ENCODE measurements at regions of chr9 and their contacts with region 1.

Region 1: DNA sequence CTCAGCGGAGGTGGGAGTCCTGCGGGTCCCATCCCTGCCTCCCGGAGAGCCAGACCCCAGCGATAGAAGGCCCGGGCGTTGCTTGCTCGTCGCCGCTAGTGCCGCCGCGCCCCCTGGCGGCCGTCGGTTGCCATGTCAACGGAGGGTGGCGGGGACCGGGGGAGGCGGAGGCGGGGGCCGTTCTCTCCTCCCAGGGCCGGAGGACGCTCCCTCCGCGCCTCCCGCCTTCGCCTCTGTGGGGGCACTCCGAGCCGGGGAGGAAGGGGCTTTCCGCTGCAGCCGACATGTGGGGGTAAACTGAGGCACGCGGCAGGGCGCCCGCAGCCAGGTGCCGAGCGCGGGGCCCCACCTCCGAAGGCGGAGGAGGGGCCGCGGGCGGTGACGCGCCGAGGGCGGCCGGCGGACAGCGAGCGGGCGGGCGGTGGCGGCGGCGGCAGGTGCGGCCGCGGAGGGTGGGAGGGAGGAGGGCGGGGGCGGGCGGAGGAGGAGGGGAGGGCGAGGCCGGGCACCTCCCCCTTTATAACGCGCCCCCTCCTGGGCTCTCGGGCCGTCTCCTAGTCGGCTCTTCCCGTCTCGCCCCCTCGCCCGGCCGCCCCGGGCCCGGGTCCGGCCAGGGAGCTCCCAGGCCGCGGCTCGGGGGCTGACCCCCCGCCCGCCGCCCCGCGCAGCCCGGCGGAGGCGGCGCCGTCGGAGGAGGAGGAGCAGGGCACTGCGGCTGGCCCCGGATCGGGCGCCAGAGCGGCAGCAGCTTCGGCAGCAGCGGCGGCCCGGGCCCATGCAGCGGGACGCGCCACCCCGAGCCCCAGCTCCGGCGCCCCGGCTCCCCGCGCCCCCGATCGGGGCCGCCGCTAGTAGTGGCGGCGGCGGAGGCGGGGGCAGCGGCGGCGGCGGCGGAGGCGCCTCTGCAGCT is 556 bp upstream of the CDK9 start:
- DNase-seq: peak; percentile 90
- H3K4me3 ChIP-seq: peak overlapping the region; percentile 77
- H3K27ac ChIP-seq: peak overlapping the region; percentile 93
- H3K4me1 ChIP-seq: peaks cover 6% of the 10 kb centered on the region
- H3K27me3 ChIP-seq: no peaks in the 10 kb centered on the region
- CTCF ChIP-seq: peak; percentile 94

Region 2: GRCh38 chr9:127568971-127569885 is 216.1 kb before region 1 on chr9:
- CTCF ChIA-PET with region 1: no interaction called
- POLR2A ChIA-PET with region 1: no interaction called
- intact Hi-C with region 1: no loop called
- DNase-seq: peak; percentile 91
- H3K4me3 ChIP-seq: peak overlapping the region; percentile 97
- H3K27ac ChIP-seq: peak overlapping the region; percentile 82
- H3K4me1 ChIP-seq: peaks cover 24% of the 10 kb centered on the region
- H3K27me3 ChIP-seq: no peaks in the 10 kb centered on the region
- CTCF ChIP-seq: no peak

Region 3: DNA sequence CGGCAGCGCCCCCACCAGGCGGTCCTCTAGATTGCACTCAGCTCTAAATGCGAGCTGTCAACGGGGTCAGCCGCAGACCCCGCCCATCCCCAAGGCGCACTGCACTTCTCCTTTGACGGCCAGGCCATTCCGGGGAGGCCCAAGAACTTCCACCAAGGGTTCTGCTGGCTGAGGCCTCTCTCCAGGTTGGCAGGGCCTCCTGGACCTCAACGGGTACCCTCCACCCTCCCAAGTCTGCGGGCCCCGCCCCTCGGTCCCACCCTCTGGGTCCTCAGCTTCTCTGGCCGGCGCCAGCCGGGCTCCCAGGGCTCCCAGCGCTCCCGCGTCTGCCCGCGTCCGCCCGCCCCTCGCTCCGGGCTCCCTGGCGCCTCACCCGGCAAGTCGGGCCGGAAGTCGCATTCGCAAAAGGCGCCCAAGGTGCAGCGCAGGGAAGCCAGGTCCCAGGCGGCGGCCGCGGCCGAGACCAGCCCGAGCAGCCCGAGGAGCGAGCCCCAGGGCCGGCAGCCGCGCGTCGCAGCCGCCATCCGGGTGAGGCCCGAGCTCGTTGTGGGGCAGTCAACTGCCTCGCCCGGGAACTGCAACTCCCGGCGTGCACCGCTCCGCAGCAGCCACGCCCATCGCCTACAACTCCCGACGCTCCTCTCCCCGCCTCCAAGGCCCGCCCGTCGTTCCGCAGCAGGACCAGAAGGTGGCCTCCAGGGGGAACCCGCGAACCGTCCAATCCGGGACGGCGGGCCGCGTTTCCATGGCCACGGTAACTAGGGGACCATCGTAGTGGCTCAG is 50.3 kb before region 1 on chr9 and contains the start of gene TOR2A:
- CTCF ChIA-PET with region 1: interaction called, 5 read pairs
- POLR2A ChIA-PET with region 1: no interaction called
- intact Hi-C with region 1: loop called (anchors 1 kb)
- DNase-seq: peak; percentile 99
- H3K4me3 ChIP-seq: peak within 1 kb of the TSS; percentile 69
- H3K27ac ChIP-seq: peak within 1 kb of the TSS; percentile 83
- H3K4me1 ChIP-seq: peaks cover 10% of the 10 kb centered on the region
- H3K27me3 ChIP-seq: no peaks in the 10 kb centered on the region
- CTCF ChIP-seq: peak; percentile 98
- total RNA-seq, gene TOR2A: 9.1 and 9.2 TPM in 2 replicates

Region 4: GRCh38 chr9:127765418-127765817 is 19.9 kb before region 1 on chr9:
- CTCF ChIA-PET with region 1: no interaction called
- POLR2A ChIA-PET with region 1: no interaction called
- intact Hi-C with region 1: no loop called
- DNase-seq: no peak
- H3K4me3 ChIP-seq: no peak overlapping the region
- H3K27ac ChIP-seq: no peak overlapping the region
- H3K4me1 ChIP-seq: no peaks in the 10 kb centered on the region
- H3K27me3 ChIP-seq: no peaks in the 10 kb centered on the region
- CTCF ChIP-seq: no peak

Region 5: GRCh38 chr9:127887792-127888191 is 102.5 kb after region 1 on chr9:
- CTCF ChIA-PET with region 1: no interaction called
- POLR2A ChIA-PET with region 1: no interaction called
- intact Hi-C with region 1: no loop called
- DNase-seq: peak; percentile 34
- H3K4me3 ChIP-seq: no peak overlapping the region
- H3K27ac ChIP-seq: no peak overlapping the region
- H3K4me1 ChIP-seq: peaks cover 29% of the 10 kb centered on the region
- H3K27me3 ChIP-seq: no peaks in the 10 kb centered on the region
- CTCF ChIP-seq: no peak